Mammary epithelial cell (primary cell): ENCODE measurements at regions of chr11 and their contacts with region 1.

Region 1: GRCh38 chr11:105168457-105168856 is 28.9 kb upstream of the CARD18 start:
- DNase-seq: peak; percentile 28
- H3K4me3 ChIP-seq: no peak overlapping the region
- H3K27ac ChIP-seq: no peak overlapping the region
- H3K4me1 ChIP-seq: peaks cover 4% of the 10 kb centered on the region
- H3K27me3 ChIP-seq: no peaks in the 10 kb centered on the region
- CTCF ChIP-seq: no peak

Region 2: GRCh38 chr11:105282658-105283057 is 114.2 kb after region 1 on chr11:
- CTCF ChIA-PET with region 1: interaction called, 14 read pairs
- dilution Hi-C with region 1: no loop called
- in situ Hi-C with region 1: no loop called
- intact Hi-C with region 1: no loop called
- DNase-seq: no peak
- H3K4me3 ChIP-seq: no peak overlapping the region
- H3K27ac ChIP-seq: no peak overlapping the region
- H3K4me1 ChIP-seq: no peaks in the 10 kb centered on the region
- H3K27me3 ChIP-seq: no peaks in the 10 kb centered on the region
- CTCF ChIP-seq: no peak